Head of caudate nucleus (tissue), 42 donors: ENCODE measurements at regions of chr15 and their contacts with region 1.

Region 1: DNA sequence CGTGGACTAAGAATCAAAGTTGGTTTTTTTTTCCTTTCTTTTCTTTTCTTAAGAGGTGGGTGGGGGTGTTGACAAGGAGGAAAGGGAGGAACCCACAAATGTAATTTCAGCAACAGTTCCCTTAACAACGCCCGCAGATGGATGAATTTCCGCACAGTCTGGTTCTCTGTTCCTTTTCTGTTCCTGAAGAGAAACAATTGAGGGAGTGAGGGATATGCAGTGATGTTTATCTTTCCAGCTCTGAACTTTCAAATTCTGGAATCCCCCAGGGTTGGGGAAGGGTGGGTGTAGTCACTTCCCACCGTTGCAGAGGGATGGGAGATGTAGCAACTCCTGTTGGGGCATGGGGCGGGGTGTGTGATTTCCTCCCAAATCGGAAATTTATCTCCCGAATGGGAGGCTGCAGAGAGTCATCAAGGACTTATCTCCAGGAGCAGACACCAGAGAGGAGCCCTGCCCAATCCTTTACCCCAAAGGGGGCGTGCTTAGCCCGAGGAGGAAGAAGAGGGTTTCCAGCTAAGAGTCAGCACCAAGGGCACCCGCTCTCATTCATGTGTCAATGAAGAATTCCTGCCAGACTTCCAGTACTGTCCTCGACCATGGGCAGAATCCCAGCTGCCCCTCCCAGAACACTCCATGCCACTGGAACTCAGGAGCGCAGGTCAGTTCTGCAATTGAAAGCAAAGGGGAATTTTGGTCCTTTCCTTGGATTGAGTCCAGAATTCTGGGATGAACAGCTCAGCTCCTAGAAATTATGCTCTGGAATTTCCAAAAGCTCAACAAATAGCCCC is 35.0 kb upstream of the CFAP161 start:
- DNase-seq: no peak

Region 2: DNA sequence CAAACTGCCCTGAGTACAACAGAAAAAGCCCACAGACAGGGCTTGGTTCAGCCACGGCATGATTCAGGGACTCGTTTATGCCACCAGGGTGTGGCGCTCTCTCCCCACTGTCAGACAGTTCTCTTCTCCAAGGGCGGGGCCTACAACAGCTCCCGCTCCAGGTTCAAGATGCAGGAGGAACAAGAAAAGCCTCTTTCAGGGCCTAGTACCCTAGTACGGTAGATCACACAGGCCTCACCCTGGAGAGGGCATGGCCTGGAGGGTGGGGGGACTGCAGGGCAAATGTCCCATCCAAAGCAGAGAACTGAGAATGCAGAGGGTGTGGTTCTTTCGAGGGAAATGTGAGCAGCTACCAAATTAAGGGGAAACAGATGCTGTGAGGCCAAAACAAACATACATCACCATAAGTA is 121.4 kb before region 1 on chr15:
- intact Hi-C with region 1: loop called (anchors 5 kb)
- DNase-seq: peak; percentile 62 to 91 (median 82)